Panc1 (cell line): ENCODE measurements at regions of chr5 and their contacts with region 1.

Region 1: GRCh38 chr5:126776497-126777256 is at the start of gene LMNB1:
- DNase-seq: peak; percentile 76
- ATAC-seq: peak; percentile 91
- H3K4me3 ChIP-seq: peak within 1 kb of the TSS; percentile 90 to 93
- H3K27ac ChIP-seq: peak within 1 kb of the TSS; percentile 99
- H3K4me1 ChIP-seq: peaks cover 11% of the 10 kb centered on the region; the same call in 1 of the 2 replicates
- H3K27me3 ChIP-seq: no peaks in the 10 kb centered on the region
- CTCF ChIP-seq: no peak
- total RNA-seq, gene LMNB1: 122 TPM

Region 2: DNA sequence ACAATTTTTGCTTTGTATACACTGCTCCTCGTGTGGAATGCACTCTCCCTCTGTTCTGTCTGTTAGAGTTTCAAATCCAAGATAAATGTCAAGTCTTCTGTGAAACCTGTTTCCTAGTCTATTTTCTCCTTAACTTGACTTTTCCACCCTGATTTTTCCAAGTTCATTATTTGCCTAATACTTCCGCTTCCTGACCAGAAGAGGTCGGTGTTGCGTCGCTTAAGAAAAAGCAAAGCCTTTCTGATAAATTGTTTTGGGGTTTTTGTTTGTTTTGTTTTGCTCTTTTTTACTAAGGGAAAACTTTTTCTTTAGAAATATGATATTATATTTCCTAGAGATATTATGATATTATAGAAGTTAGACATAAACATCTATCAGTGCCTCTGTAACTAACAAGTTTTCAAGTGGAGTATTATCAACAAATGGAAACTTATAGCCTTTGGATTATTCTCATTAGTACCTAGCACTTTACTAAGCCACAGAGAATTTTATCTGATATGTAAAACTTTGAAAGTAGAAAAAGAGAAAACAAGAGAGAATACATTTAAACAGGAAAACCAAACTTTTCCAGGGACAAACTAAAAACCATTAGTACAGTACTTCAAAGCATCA is 120.2 kb before region 1 on chr5:
- CTCF ChIA-PET with region 1: interaction called, 6 read pairs
- POLR2A ChIA-PET with region 1: no interaction called
- in situ Hi-C with region 1: no loop called
- intact Hi-C with region 1: loop called (anchors 5 kb)
- DNase-seq: no peak
- ATAC-seq: no peak
- H3K4me3 ChIP-seq: no peak overlapping the region
- H3K27ac ChIP-seq: no peak overlapping the region
- H3K4me1 ChIP-seq: no peaks in the 10 kb centered on the region
- H3K27me3 ChIP-seq: no peaks in the 10 kb centered on the region
- CTCF ChIP-seq: peak; percentile 83; the same call in 1 of the 2 replicates

Region 3: DNA sequence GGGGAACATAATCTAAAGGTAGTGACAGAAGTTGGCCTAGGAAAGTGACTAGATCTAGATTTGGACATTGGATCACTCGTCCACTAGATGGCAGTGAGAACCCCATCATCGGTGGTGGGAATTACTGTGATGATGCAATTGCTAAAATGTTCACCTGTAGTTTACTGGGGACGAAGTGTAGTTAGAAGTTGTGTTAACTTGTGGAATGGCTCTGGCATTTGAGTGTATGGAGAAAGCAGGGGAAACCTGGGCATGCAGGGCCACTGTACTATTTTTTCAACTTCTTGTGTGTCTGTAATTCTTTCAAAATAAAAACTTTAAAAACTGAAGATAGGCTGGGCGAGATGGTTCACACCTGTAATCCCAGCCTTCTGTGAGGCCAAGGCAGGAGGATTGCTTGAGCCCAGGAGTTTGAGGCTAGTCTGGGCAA is 100.5 kb before region 1 on chr5:
- CTCF ChIA-PET with region 1: interaction called, 9 read pairs
- POLR2A ChIA-PET with region 1: interaction called, 26 read pairs
- in situ Hi-C with region 1: no loop called
- intact Hi-C with region 1: loop called (anchors 1 kb)
- DNase-seq: peak; percentile 64
- ATAC-seq: peak; percentile 80
- H3K4me3 ChIP-seq: 0 out of 4 replicates have a peak overlapping the region, but pooled peaks of 1 of the 2 experiments have one; percentile 3
- H3K27ac ChIP-seq: peak overlapping the region; percentile 18; the same call in 1 of the 2 replicates
- H3K4me1 ChIP-seq: peaks cover 6% of the 10 kb centered on the region; the same call in 1 of the 2 replicates
- H3K27me3 ChIP-seq: no peaks in the 10 kb centered on the region
- CTCF ChIP-seq: peak; percentile 87

Region 4: GRCh38 chr5:126808521-126808988 is 31.9 kb after region 1 on chr5:
- CTCF ChIA-PET with region 1: interaction called, 10 read pairs
- POLR2A ChIA-PET with region 1: interaction called, 7 read pairs
- in situ Hi-C with region 1: no loop called
- intact Hi-C with region 1: no loop called
- DNase-seq: no peak
- ATAC-seq: peak; percentile 79
- H3K4me3 ChIP-seq: no peak overlapping the region
- H3K27ac ChIP-seq: no peak overlapping the region
- H3K4me1 ChIP-seq: no peaks in the 10 kb centered on the region
- H3K27me3 ChIP-seq: no peaks in the 10 kb centered on the region
- CTCF ChIP-seq: peak; percentile 73

Region 5: DNA sequence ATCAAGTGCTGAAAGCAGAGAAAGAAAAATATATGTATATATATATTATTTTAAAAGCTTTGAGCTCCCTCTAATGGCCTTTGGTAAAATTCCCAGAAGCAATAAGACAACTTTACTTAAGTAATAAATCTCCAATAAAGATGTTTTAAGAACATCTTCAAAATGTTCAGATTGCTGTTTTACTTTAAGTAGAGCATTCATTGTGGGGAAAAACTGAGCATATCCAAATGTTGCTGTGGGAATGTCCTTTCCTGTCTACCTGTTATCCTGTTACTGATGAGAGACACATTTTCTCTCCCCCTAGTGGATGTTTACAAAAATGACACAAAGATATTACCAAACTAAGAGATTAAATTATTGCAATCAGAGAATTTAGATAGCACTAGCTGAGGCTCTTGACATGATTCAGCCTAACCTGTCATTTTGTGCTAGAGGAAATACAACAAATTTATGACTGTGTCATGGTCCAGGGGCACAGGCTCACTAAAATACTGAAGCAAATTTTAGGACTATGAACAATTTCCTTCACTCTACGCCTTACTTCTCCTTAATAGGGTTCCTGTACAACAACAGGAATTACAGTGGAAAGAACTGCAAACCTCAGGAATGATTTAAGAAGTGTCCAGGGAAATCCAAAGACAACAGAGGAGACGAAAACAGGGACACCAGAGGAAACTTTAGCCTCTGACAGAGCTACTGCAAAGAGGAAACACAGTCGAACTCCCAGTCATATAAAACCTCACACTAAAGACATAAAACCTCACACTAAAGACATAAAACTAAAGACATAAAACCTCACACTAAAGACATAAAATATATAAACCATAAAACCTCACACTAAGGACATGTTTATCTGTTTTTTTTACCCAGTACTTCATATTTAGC is 716.4 kb after region 1 on chr5:
- CTCF ChIA-PET with region 1: no interaction called
- POLR2A ChIA-PET with region 1: interaction called, 19 read pairs
- in situ Hi-C with region 1: no loop called
- intact Hi-C with region 1: no loop called
- DNase-seq: peak; percentile 54
- ATAC-seq: peak; percentile 78; the same call in 1 of the 2 replicates
- H3K4me3 ChIP-seq: no peak overlapping the region
- H3K27ac ChIP-seq: no peak overlapping the region
- H3K4me1 ChIP-seq: no peaks in the 10 kb centered on the region
- H3K27me3 ChIP-seq: peaks cover 9% of the 10 kb centered on the region
- CTCF ChIP-seq: peak; percentile 79; the same call in 1 of the 2 replicates